Activated CD4-positive, alpha-beta memory T cell treated with anti-CD3 and anti-CD28 coated beads, Interleukin-2, amount 10 ng/mL, durations not matched to agents 7 days and 5 days (primary cell): ENCODE measurements at regions of chr1 and their contacts with region 1.

Region 1: GRCh38 chr1:12153181-12153785 is 13.5 kb upstream of the TNFRSF1B start:
- DNase-seq: peak; percentile 51
- H3K4me3 Mint-ChIP-seq: no peak overlapping the region
- H3K27ac Mint-ChIP-seq: peak overlapping the region; percentile 98
- H3K4me1 Mint-ChIP-seq: peaks cover 91% of the 10 kb centered on the region
- H3K27me3 Mint-ChIP-seq: no peaks in the 10 kb centered on the region

Region 2: DNA sequence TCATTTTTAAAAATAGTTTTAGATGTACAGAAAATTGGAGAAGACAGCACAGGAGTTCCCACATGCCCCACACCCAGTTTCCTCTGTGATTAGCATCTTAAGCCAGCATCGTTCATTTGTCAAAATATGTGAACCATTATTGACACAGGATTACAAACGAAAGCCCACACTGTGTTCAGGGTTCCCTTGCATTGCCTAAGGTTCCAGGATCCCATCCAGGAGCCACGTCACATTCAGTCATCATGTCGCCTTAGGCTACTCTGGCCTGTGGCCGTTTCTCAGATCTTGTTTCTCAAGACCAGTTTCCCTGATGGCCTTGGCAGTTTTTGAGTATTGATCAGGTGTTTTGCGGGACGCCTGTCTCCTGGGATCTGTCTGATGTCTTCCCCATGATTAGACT is 21.2 kb before region 1 on chr1:
- CTCF ChIA-PET with region 1: interaction called, 19 read pairs
- POLR2A ChIA-PET with region 1: interaction called, 23 read pairs
- DNase-seq: no peak
- H3K4me3 Mint-ChIP-seq: no peak overlapping the region
- H3K27ac Mint-ChIP-seq: peak overlapping the region; percentile 96
- H3K4me1 Mint-ChIP-seq: peaks cover 37% of the 10 kb centered on the region
- H3K27me3 Mint-ChIP-seq: no peaks in the 10 kb centered on the region

Region 3: GRCh38 chr1:12141128-12141850 is 12.0 kb before region 1 on chr1:
- CTCF ChIA-PET with region 1: interaction called, 14 read pairs
- POLR2A ChIA-PET with region 1: interaction called, 47 read pairs
- DNase-seq: no peak
- H3K4me3 Mint-ChIP-seq: no peak overlapping the region
- H3K27ac Mint-ChIP-seq: no peak overlapping the region
- H3K4me1 Mint-ChIP-seq: peaks cover 33% of the 10 kb centered on the region
- H3K27me3 Mint-ChIP-seq: no peaks in the 10 kb centered on the region

Region 4: GRCh38 chr1:12166834-12167492 is 13.7 kb after region 1 on chr1 and contains the start of gene TNFRSF1B:
- CTCF ChIA-PET with region 1: interaction called, 19 read pairs
- POLR2A ChIA-PET with region 1: interaction called, 918 read pairs
- DNase-seq: peak; percentile 80
- H3K4me3 Mint-ChIP-seq: peak within 1 kb of the TSS; percentile 100
- H3K27ac Mint-ChIP-seq: peak within 1 kb of the TSS; percentile 98
- H3K4me1 Mint-ChIP-seq: peaks cover 77% of the 10 kb centered on the region
- H3K27me3 Mint-ChIP-seq: no peaks in the 10 kb centered on the region
- total RNA-seq, gene TNFRSF1B: 434 to 447 TPM

Region 5: GRCh38 chr1:12208764-12209494 is 55.6 kb after region 1 on chr1:
- CTCF ChIA-PET with region 1: interaction called, 4 read pairs
- POLR2A ChIA-PET with region 1: interaction called, 11 read pairs
- DNase-seq: peak; percentile 85
- H3K4me3 Mint-ChIP-seq: peak overlapping the region; percentile 20
- H3K27ac Mint-ChIP-seq: peak overlapping the region; percentile 68
- H3K4me1 Mint-ChIP-seq: peaks cover 66% of the 10 kb centered on the region
- H3K27me3 Mint-ChIP-seq: peaks cover 5% of the 10 kb centered on the region